Aorta (tissue), 5 donors: ENCODE measurements at regions of chr22 and their contacts with region 1.

Region 1: GRCh38 chr22:25110846-25111578 is 88.6 kb upstream of the CRYBB3 start:
- DNase-seq: peak; percentile 74 to 90
- ATAC-seq: peak; percentile 83
- H3K4me3 ChIP-seq: peak overlapping the region; percentile 32 to 57
- H3K27ac ChIP-seq: peak overlapping the region; percentile 79 to 96
- H3K4me1 ChIP-seq: no peaks in the 10 kb centered on the region
- H3K27me3 ChIP-seq: no peaks in the 10 kb centered on the region

Region 2: DNA sequence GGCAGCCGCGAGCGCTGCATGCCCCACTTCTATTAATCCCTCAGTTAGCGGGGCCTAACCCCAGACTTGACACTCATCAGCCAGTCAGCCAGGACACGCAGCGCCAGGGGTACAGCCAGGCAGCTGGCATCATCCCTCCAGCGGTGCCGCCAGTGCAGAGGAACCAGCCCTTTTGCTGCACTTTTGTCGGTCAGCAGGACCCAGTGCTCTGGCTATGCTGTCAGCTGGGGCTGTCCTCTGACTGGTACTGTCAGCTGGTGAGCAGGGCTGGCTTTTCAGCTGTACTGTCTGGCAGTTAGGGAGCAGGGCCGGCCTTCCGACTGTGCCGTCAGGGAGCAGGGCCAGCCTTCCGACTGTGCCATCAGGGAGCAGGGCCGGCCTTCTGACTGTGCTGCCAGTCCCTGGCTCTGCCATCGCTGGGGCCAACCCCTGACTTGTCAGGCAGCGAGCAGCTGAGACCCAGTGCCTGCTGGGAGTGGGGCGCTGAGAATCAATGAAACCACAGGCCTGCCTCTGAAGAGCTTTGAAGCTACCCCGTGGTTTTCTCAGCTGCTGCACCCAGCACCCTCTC is 43.1 kb before region 1 on chr22:
- intact Hi-C with region 1: loop called in 1 of 2 experiments (anchors 5 kb)
- DNase-seq: peak; percentile 84 to 90
- ATAC-seq: peak; percentile 78
- H3K4me3 ChIP-seq: no peak overlapping the region
- H3K27ac ChIP-seq: peak overlapping the region; percentile 47 to 85
- H3K4me1 ChIP-seq: peaks cover 0 to 3% of the 10 kb centered on the region in 2 donors
- H3K27me3 ChIP-seq: no peaks in the 10 kb centered on the region

Region 3: GRCh38 chr22:25076336-25076735 is 34.7 kb before region 1 on chr22:
- intact Hi-C with region 1: loop called in 1 of 2 experiments (anchors 5 kb)
- DNase-seq: no peak
- ATAC-seq: no peak
- H3K4me3 ChIP-seq: no peak overlapping the region
- H3K27ac ChIP-seq: peak overlapping the region; percentile 1 to 39
- H3K4me1 ChIP-seq: peaks cover 0 to 8% of the 10 kb centered on the region in 2 donors
- H3K27me3 ChIP-seq: no peaks in the 10 kb centered on the region